ENCODE measurements at regions of chr17 and their contacts with region 1.

Region 1: GRCh38 chr17:4304417-4305027 is 40.7 kb upstream of the ANKFY1 start:
- DNase-seq: peak; percentile 73
- H3K4me3 Mint-ChIP-seq: no peak overlapping the region
- H3K27ac Mint-ChIP-seq: no peak overlapping the region
- H3K4me1 Mint-ChIP-seq: peaks cover 6% of the 10 kb centered on the region
- H3K27me3 Mint-ChIP-seq: no peaks in the 10 kb centered on the region
- CTCF ChIP-seq: peak; percentile 64

Region 2: GRCh38 chr17:4293572-4293971 is 10.9 kb before region 1 on chr17:
- CTCF ChIA-PET with region 1: interaction called, 18 read pairs
- POLR2A ChIA-PET with region 1: interaction called, 5 read pairs
- intact Hi-C with region 1: no loop called
- DNase-seq: no peak
- H3K4me3 Mint-ChIP-seq: no peak overlapping the region
- H3K27ac Mint-ChIP-seq: no peak overlapping the region
- H3K4me1 Mint-ChIP-seq: no peaks in the 10 kb centered on the region
- H3K27me3 Mint-ChIP-seq: no peaks in the 10 kb centered on the region
- CTCF ChIP-seq: no peak

Region 3: DNA sequence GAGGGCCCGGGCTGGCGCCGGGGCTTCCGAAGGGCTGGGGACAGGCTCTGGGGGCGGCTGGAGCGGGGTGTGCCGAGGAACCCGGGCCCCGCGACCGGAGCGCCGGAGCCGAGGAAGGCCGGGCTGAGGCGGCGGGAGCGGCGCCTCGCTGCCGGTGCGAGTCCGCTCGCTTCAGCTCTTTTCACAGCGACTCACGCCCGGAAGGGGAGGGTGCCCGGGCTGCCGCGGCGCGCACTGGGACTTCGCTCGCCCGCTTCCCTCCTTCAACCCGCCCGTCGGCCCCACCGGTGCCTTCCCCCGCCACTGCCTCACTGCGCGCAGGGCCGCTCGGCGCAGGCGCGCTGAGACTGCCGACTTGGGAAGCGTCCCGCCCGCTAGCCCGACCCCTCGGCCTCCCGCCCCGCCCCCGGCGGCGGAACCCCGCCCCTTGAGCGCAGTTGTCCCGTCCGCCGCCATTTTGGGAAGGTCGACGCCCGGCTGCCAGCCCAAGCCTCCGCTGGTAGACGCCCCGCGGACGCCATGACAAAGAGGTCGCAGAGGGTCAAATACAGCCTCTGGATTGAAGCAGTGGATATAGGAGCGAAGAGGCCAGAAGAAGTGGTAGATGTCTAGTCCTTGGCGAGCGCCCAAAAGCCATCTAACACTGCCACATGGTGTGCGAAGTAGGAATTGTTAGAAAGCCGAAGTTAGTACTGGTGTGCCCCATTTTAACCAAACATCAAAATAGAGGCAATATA is 62.0 kb after region 1 on chr17 and contains the start of gene UBE2G1:
- CTCF ChIA-PET with region 1: no interaction called
- POLR2A ChIA-PET with region 1: interaction called, 4 read pairs
- intact Hi-C with region 1: loop called (anchors 2 kb)
- DNase-seq: peak; percentile 95
- H3K4me3 Mint-ChIP-seq: peak within 1 kb of the TSS; percentile 80
- H3K27ac Mint-ChIP-seq: peak within 1 kb of the TSS; percentile 87
- H3K4me1 Mint-ChIP-seq: peaks cover 12% of the 10 kb centered on the region
- H3K27me3 Mint-ChIP-seq: no peaks in the 10 kb centered on the region
- CTCF ChIP-seq: peak; percentile 31
- total RNA-seq, gene UBE2G1: 65.1 and 78.5 TPM in 2 replicates

Measured in MCF 10A (cell line).